ENCODE measurements at regions of chr16 and their contacts with region 1.

Region 1: DNA sequence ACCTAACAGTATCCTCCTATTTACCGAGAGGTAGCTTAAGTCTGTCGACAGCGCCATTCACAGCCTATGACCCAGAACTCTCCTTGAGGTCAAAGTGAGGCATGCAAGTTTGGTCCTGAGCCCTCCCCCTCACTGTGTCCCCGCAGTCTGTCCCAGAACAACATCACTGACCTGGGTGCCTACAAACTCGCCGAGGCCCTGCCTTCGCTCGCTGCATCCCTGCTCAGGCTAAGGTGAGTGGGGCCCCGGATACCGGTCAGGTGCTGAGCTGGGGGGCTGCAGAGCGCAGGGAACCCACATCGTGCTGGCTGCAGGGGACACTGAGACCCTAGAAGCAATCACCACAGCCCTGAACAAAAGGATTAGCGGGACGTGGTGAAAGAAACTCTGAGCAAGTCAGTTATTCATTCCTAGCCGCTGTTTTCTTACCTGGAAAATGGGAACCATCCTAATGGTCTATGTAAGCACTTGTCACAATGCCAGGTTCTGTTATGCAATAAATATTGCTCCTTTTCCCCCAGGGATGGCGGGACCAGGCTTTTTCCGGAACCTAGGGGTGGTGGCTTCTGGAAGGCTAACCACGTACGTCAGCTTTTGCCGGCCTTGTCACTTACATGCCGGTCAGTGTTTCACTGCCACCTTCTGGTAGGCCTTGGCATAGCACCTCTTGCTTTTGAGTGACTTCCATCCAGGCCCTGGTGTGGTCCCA is 23.8 kb downstream of the DEXI start:
- DNase-seq: peak; percentile 91
- ATAC-seq: peak; percentile 80
- H3K4me3 ChIP-seq: no peak overlapping the region
- H3K4me3 Mint-ChIP-seq: peak overlapping the region; percentile 44
- H3K27ac ChIP-seq: peak overlapping the region; percentile 51 to 95
- H3K27ac Mint-ChIP-seq: peak overlapping the region; percentile 82
- H3K4me1 ChIP-seq: peaks cover 56 to 63% of the 10 kb centered on the region in 2 donors
- H3K4me1 Mint-ChIP-seq: peaks cover 66% of the 10 kb centered on the region
- H3K27me3 ChIP-seq: no peaks in the 10 kb centered on the region
- H3K27me3 Mint-ChIP-seq: no peaks in the 10 kb centered on the region
- CTCF ChIP-seq: peak; percentile 94

Region 2: GRCh38 chr16:10737068-10737625 is 181.3 kb before region 1 on chr16:
- CTCF ChIA-PET with region 1: interaction called, 56 read pairs
- POLR2A ChIA-PET with region 1: interaction called, 5 read pairs
- intact Hi-C with region 1: loop called (anchors 2 kb)
- DNase-seq: peak; percentile 87
- ATAC-seq: peak; percentile 84
- H3K4me3 ChIP-seq: peak overlapping the region in 4 of 5 experiments; percentile 29 to 68 (median 46)
- H3K4me3 Mint-ChIP-seq: peak overlapping the region; percentile 80
- H3K27ac ChIP-seq: peak overlapping the region; percentile 63 to 70
- H3K27ac Mint-ChIP-seq: peak overlapping the region; percentile 85
- H3K4me1 ChIP-seq: peaks cover 23 to 29% of the 10 kb centered on the region in 2 donors
- H3K4me1 Mint-ChIP-seq: peaks cover 44% of the 10 kb centered on the region
- H3K27me3 ChIP-seq: no peaks in the 10 kb centered on the region
- H3K27me3 Mint-ChIP-seq: no peaks in the 10 kb centered on the region
- CTCF ChIP-seq: peak; percentile 96

Region 3: DNA sequence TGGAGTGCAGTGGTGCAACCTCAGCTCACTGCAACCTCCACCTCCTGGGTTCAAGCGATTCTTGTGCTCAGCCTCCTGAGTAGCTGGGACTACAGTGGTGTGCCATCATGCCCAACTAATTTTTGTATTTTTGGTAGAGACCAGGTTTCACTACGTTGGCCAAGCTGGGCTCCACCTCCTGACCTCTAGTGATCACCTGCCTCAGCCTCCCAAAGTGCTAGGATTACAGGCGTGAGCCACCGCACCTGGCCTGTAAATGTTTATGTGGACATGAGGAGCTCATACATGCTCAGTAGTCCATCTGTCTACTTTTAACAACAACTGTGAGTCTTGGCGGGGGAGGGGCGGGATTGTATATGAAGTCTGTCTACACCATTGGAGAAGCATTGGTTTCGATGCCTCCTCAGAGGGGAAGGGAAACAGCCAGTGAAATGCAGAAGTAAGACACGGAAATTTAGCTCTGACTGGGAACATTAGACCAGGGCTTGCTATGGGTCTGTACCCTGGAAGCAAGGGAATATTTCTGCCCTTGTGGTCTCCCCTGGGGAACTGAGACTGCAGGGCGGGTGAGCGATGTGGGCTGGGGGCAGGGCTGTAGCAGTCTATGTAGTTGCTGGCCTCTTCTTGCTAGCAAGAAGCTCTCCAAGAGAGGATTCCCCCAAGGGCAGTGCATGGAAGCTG is 165.5 kb before region 1 on chr16:
- CTCF ChIA-PET with region 1: interaction called, 33 read pairs
- POLR2A ChIA-PET with region 1: no interaction called
- intact Hi-C with region 1: loop called (anchors 1 kb)
- DNase-seq: peak; percentile 86
- ATAC-seq: peak; percentile 82
- H3K4me3 ChIP-seq: peak overlapping the region in 1 of 5 experiments; percentile 20
- H3K4me3 Mint-ChIP-seq: peak overlapping the region; percentile 54
- H3K27ac ChIP-seq: peak overlapping the region; percentile 75 to 76
- H3K27ac Mint-ChIP-seq: peak overlapping the region; percentile 73
- H3K4me1 ChIP-seq: peaks cover 19 to 41% of the 10 kb centered on the region in 2 donors
- H3K4me1 Mint-ChIP-seq: peaks cover 52% of the 10 kb centered on the region
- H3K27me3 ChIP-seq: no peaks in the 10 kb centered on the region
- H3K27me3 Mint-ChIP-seq: no peaks in the 10 kb centered on the region
- CTCF ChIP-seq: no peak

Region 4: GRCh38 chr16:10871149-10871991 is 47.1 kb before region 1 on chr16:
- CTCF ChIA-PET with region 1: interaction called, 98 read pairs
- POLR2A ChIA-PET with region 1: interaction called, 59 read pairs
- intact Hi-C with region 1: loop called (anchors 1 kb)
- DNase-seq: peak; percentile 73
- ATAC-seq: peak; percentile 37
- H3K4me3 ChIP-seq: peak overlapping the region in 3 of 5 experiments; percentile 3 to 6 (median 3)
- H3K4me3 Mint-ChIP-seq: peak overlapping the region; percentile 83
- H3K27ac ChIP-seq: peak overlapping the region; percentile 91 to 92
- H3K27ac Mint-ChIP-seq: peak overlapping the region; percentile 93
- H3K4me1 ChIP-seq: peaks cover 93 to 98% of the 10 kb centered on the region in 2 donors
- H3K4me1 Mint-ChIP-seq: peaks cover 95% of the 10 kb centered on the region
- H3K27me3 ChIP-seq: no peaks in the 10 kb centered on the region
- H3K27me3 Mint-ChIP-seq: no peaks in the 10 kb centered on the region
- CTCF ChIP-seq: no peak

Region 5: DNA sequence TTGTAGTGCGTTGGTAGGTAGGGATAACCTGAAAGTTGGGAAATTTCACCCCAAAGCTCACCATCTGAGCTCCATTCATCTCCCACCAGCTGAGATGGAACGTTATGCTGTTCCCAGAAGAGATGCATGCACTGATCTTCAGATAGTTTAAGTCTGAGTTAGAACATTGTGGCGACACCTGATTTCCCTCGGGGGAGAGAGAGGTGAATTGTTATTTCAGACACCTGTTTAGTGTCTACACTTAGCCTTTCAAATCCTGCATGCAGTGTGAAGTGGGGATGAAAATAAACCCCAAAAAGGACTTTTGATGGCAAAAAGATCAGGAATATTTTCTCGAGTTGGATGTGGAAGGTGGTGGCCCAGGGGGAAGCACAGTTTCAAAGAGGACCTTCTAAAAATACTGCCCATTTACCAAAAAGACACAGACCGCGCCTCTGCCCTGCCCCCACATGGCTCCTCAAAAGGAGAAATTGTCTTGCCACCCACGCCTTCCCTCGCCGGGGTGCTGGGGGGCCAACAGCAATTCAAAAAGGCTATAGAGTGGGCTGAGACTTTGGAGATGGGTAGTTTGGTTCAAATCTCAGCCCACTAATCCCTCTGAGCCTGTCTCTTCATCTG is 30.0 kb before region 1 on chr16:
- CTCF ChIA-PET with region 1: interaction called, 141 read pairs
- POLR2A ChIA-PET with region 1: interaction called, 5 read pairs
- intact Hi-C with region 1: no loop called
- DNase-seq: peak; percentile 69
- ATAC-seq: peak; percentile 15
- H3K4me3 ChIP-seq: peak overlapping the region; percentile 41 to 76 (median 47)
- H3K4me3 Mint-ChIP-seq: peak overlapping the region; percentile 81
- H3K27ac ChIP-seq: peak overlapping the region; percentile 74 to 85
- H3K27ac Mint-ChIP-seq: peak overlapping the region; percentile 87
- H3K4me1 ChIP-seq: peaks cover 98 to 100% of the 10 kb centered on the region in 2 donors
- H3K4me1 Mint-ChIP-seq: peaks cover 96% of the 10 kb centered on the region
- H3K27me3 ChIP-seq: no peaks in the 10 kb centered on the region
- H3K27me3 Mint-ChIP-seq: no peaks in the 10 kb centered on the region
- CTCF ChIP-seq: no peak

Region 6: GRCh38 chr16:10937068-10937859 is 18.8 kb after region 1 on chr16:
- CTCF ChIA-PET with region 1: interaction called, 14 read pairs
- POLR2A ChIA-PET with region 1: interaction called, 3 read pairs
- intact Hi-C with region 1: no loop called
- DNase-seq: peak; percentile 41
- ATAC-seq: no peak
- H3K4me3 ChIP-seq: no peak overlapping the region
- H3K4me3 Mint-ChIP-seq: peak overlapping the region; percentile 32
- H3K27ac ChIP-seq: peak overlapping the region; percentile 20 to 72
- H3K27ac Mint-ChIP-seq: peak overlapping the region; percentile 81
- H3K4me1 ChIP-seq: peaks cover 47 to 65% of the 10 kb centered on the region in 2 donors
- H3K4me1 Mint-ChIP-seq: peaks cover 79% of the 10 kb centered on the region
- H3K27me3 ChIP-seq: no peaks in the 10 kb centered on the region
- H3K27me3 Mint-ChIP-seq: no peaks in the 10 kb centered on the region
- CTCF ChIP-seq: no peak

Region 7: GRCh38 chr16:11047057-11047456 is 128.6 kb after region 1 on chr16:
- CTCF ChIA-PET with region 1: no interaction called
- POLR2A ChIA-PET with region 1: no interaction called
- intact Hi-C with region 1: no loop called
- DNase-seq: no peak
- ATAC-seq: no peak
- H3K4me3 ChIP-seq: no peak overlapping the region
- H3K4me3 Mint-ChIP-seq: no peak overlapping the region
- H3K27ac ChIP-seq: no peak overlapping the region
- H3K27ac Mint-ChIP-seq: no peak overlapping the region
- H3K4me1 ChIP-seq: peaks cover 6 to 8% of the 10 kb centered on the region in 2 donors
- H3K4me1 Mint-ChIP-seq: peaks cover 10% of the 10 kb centered on the region
- H3K27me3 ChIP-seq: no peaks in the 10 kb centered on the region
- H3K27me3 Mint-ChIP-seq: no peaks in the 10 kb centered on the region
- CTCF ChIP-seq: no peak

Region 8: GRCh38 chr16:12750554-12750918 is 1832.1 kb after region 1 on chr16:
- CTCF ChIA-PET with region 1: no interaction called
- POLR2A ChIA-PET with region 1: no interaction called
- intact Hi-C with region 1: no loop called
- DNase-seq: no peak
- ATAC-seq: no peak
- H3K4me3 ChIP-seq: no peak overlapping the region
- H3K4me3 Mint-ChIP-seq: no peak overlapping the region
- H3K27ac ChIP-seq: no peak overlapping the region
- H3K27ac Mint-ChIP-seq: no peak overlapping the region
- H3K4me1 ChIP-seq: no peaks in the 10 kb centered on the region
- H3K4me1 Mint-ChIP-seq: peaks cover 3% of the 10 kb centered on the region
- H3K27me3 ChIP-seq: no peaks in the 10 kb centered on the region
- H3K27me3 Mint-ChIP-seq: no peaks in the 10 kb centered on the region
- CTCF ChIP-seq: no peak

Measured in B cell (primary cell).